Left ventricle myocardium superior (tissue), 1 donor: ENCODE measurements at regions of chr6 and their contacts with region 1.

Region 1: DNA sequence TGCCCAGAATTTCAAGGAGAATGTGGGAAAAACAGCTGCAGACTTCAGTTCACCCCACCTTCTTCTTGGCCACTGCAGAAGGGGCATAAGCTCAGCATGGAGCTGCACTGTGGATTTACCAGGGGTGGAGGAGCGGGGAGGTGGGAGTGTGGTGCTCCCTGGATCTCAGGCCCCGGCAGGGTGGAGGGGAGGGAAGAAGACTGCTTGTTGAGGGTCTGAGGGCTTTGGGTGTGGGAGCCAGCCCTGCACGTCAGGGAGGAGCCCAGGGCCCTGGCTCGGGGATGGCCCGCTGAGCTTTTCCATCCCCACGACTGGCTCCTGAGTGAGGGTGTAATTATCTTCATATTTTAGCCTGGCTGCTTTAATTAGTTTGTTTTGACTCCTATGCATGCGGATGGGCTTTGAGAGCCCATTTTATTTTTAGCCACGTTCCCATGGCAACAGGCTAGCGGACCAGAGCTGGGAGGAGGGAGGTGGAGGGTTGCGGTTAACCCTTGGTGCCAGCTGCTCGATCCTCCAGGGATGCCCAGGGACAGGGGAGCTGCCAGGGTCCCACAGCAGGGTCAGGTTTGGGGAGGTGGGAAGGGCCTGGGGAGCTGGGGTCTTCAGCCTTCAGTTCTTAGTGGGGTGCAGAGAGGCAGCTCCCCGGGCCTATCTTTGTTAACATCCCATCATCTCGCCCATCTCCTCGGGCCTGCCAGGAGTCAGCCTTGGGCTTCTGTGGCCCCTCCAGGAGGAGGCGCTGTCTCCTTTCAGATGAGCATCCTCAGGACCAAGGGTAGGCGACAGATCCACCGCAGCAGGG is 68.2 kb downstream of the RAB44 start:
- DNase-seq: peak; percentile 86
- ATAC-seq: peak; percentile 66

Region 2: DNA sequence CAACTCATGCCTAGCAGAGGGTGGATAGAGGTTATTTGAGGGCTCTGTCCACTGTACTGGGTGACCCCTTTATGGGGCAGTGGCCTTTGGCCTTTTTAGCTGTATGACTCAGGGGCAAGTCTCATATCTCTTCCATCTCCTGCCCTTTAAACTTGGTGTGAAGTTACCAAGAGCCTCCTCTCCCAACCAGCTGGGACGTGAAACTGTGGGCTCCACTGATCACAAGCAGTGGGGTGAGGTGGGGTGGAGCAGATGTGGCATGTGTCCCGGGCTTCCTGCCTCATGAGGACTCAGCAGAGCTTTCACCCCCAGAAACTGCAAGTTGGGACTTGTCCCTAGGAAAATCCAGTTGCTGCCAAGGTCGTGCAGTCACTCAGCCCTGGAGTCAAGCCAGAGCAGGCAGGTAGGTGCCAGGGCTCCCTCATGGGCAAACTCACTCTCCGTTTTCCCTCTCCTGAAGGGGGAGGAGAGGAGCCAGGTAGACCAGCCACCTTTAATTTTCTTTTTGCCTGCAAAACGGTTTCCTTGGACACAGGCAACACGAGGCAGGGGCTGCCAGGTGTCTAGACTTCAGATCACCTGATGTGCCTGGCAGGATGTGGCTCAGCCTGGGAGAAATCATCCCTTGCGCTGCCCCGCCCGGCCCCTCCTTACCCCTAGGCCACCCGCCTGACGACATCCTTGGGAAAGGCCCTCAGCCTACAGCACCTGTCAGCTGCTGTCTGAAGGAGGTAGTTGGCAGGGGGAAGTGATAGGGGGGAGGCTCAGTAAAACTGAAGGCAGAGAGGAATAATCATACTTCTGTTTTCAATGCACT is 83.3 kb before region 1 on chr6:
- intact Hi-C with region 1: no loop called
- DNase-seq: peak; percentile 74
- ATAC-seq: no peak

Region 3: DNA sequence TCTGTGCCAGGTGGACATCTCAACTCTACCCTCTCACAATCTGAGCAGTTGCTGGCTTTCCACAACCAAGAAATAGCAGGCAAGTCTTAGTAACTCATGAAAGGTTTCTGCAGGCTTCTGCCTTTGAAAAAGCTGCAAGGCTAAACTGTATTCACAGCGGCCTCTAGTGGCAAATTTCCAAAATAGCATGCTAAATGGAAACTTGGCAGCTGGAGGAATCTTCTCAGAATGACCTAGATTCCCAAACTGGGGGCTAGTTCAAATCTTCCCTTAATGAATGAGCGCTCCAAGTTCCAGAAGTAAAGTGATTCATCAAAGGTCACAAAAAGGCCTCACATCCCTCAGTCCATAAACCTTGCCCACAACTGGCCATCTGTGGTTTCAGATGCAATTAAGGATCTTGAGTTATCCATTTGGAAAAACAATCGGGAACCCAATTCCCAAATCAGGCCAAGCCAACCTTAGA is 85.4 kb after region 1 on chr6:
- intact Hi-C with region 1: loop called (anchors 5 kb)
- DNase-seq: no peak
- ATAC-seq: peak; percentile 20